ENCODE measurements at regions of chr17 and their contacts with region 1.

Region 1: DNA sequence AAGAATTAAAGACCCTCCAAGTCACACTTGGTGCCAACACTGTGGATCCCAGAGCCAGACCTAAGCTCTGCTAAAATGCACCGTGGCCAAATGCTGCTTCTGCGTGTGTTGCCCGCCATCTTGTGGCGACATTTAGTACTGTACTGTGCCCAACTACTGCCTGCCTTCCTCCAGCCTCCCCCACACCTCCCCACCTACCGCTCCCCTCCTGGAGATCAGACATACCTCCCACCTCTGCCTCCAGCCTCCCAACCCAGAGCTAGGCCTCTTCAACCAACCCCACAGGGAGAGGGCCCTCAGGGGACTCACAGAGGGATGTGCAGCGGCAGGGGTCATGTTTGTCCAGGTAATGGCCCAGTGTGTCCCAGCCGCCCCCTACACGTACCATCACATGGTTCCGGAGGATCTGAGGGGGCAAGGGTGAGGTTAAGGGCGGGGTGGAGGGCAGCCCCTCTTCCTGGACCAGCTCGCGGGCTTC is 5.5 kb downstream of the GAS2L2 start:
- DNase-seq: peak; percentile 86

Region 2: DNA sequence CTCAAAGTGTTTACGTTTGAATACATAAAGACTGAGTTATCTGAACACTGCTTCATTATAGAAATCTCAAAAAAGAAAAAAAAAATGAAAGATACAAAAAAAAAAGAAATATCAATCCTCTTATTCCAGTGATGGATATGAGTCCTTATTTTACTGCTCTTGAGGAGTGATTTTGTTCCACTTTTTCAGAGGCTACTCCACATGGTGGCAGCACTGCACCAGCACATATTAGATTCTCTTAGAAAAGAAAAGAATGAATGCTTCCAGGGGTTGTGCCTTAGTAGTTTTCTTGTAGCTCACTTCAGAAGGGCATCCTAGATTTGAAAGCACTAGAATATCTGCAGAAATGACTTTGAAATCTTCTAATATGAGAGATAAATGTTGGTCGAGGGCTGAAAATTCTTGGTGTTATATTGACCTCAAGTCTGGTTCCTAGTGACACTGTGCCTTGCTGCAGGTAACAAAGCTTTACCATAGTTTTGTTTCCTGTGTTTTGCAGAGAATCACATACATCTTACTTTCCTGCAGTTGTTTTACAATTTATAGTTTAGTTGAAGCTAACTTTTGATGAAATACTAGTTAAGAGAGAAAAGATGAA is 134.6 kb before region 1 on chr17:
- intact Hi-C with region 1: loop called (anchors 5 to 10 kb)
- DNase-seq: no peak